Activated CD4-positive, alpha-beta T cell treated with anti-CD3 and anti-CD28 coated beads for 36 hours (primary cell): ENCODE measurements at regions of chr10 and their contacts with region 1.

Region 1: DNA sequence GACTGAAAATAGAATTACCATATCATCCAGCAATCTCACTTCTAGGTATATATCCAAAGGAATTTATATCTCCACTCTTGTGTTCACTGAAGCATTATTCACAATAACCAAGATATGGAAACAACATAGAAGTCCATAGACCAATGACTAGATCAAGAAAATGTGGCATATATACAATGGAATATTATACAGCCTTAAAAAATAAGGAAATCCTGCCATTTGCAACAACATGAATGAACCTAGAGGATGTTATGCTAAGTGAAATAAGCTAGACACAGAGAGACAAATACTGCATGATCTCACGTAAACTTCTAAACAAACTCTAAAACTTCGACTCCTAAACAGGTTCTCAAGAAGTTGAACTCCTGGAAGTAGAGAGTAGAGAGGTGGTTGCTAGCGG is 254.5 kb downstream of the SKIDA1 start:
- DNase-seq: no peak
- ATAC-seq: no peak
- H3K4me3 Mint-ChIP-seq: no peak overlapping the region
- H3K27ac Mint-ChIP-seq: no peak overlapping the region
- H3K4me1 Mint-ChIP-seq: no peaks in the 10 kb centered on the region
- H3K27me3 Mint-ChIP-seq: peaks cover 2% of the 10 kb centered on the region

Region 2: GRCh38 chr10:21078410-21079329 is 192.3 kb before region 1 on chr10:
- CTCF ChIA-PET with region 1: no interaction called
- POLR2A ChIA-PET with region 1: no interaction called
- intact Hi-C with region 1: loop called in 1 of 2 experiments (anchors 1 kb)
- DNase-seq: peak; percentile 62
- ATAC-seq: no peak
- H3K4me3 Mint-ChIP-seq: no peak overlapping the region
- H3K27ac Mint-ChIP-seq: no peak overlapping the region
- H3K4me1 Mint-ChIP-seq: no peaks in the 10 kb centered on the region
- H3K27me3 Mint-ChIP-seq: peaks cover 12% of the 10 kb centered on the region

Region 3: GRCh38 chr10:21340331-21340730 is 69.4 kb after region 1 on chr10:
- CTCF ChIA-PET with region 1: no interaction called
- POLR2A ChIA-PET with region 1: no interaction called
- intact Hi-C with region 1: no loop called
- DNase-seq: no peak
- ATAC-seq: no peak
- H3K4me3 Mint-ChIP-seq: no peak overlapping the region
- H3K27ac Mint-ChIP-seq: no peak overlapping the region
- H3K4me1 Mint-ChIP-seq: no peaks in the 10 kb centered on the region
- H3K27me3 Mint-ChIP-seq: no peaks in the 10 kb centered on the region